Activated CD8-positive, alpha-beta memory T cell treated with anti-CD3 and anti-CD28 coated beads, Interleukin-2, amount 10 ng/mL, durations not matched to agents 7 days and 5 days (primary cell): ENCODE measurements at regions of chr14 and their contacts with region 1.

Region 1: DNA sequence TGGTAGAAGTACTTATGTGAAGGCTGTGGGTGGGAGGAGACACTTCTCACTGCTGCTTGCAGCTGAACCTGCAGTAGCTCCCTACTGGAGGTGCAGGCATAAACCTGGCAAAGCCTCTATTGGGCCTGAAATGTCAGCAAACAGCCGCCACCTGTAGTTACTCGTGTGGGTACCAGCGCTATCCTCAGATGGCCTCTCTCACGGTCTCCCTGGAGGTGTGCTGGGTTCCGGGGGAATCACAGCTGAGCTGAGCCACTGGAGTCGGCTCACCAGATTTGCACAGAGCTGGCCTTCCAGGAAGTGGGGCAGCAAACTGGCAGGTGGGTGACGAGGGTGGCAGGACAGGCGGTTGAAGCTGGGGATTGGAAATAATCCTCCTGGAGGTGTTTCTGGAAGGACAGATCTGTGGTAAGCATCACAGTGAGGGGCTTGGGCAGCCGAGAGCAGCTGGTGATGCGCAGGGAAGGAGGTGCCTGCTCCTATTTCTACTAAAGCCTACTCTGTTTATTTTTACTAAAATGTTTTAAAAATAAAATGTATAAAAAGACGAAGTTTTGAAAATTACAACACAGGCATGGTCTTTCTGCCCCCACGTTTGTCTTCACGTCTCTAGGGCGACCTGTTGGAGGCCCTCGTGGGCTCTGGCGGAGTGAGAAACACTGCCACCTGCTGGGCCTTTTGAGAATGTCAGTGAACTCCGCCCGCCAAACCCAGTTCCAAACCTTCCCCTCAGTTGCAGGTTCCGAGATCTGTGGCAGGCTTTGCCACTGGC is 67.8 kb upstream of the PLEKHG3 start:
- DNase-seq: peak; percentile 77
- ATAC-seq: peak; percentile 94
- H3K4me3 Mint-ChIP-seq: no peak overlapping the region
- H3K27ac Mint-ChIP-seq: no peak overlapping the region
- H3K4me1 Mint-ChIP-seq: peaks cover 8% of the 10 kb centered on the region
- H3K27me3 Mint-ChIP-seq: peaks cover 16% of the 10 kb centered on the region

Region 2: GRCh38 chr14:64338616-64339316 is 297.6 kb before region 1 on chr14:
- CTCF ChIA-PET with region 1: interaction called, 41 read pairs
- DNase-seq: peak; percentile 96
- ATAC-seq: peak; percentile 84
- H3K4me3 Mint-ChIP-seq: peak overlapping the region; percentile 94
- H3K27ac Mint-ChIP-seq: peak overlapping the region; percentile 83
- H3K4me1 Mint-ChIP-seq: peaks cover 25% of the 10 kb centered on the region
- H3K27me3 Mint-ChIP-seq: no peaks in the 10 kb centered on the region

Region 3: GRCh38 chr14:64510825-64511671 is 125.3 kb before region 1 on chr14:
- CTCF ChIA-PET with region 1: interaction called, 12 read pairs
- DNase-seq: peak; percentile 79
- ATAC-seq: peak; percentile 35
- H3K4me3 Mint-ChIP-seq: peak overlapping the region; percentile 91
- H3K27ac Mint-ChIP-seq: peak overlapping the region; percentile 98
- H3K4me1 Mint-ChIP-seq: peaks cover 66% of the 10 kb centered on the region
- H3K27me3 Mint-ChIP-seq: no peaks in the 10 kb centered on the region

Region 4: DNA sequence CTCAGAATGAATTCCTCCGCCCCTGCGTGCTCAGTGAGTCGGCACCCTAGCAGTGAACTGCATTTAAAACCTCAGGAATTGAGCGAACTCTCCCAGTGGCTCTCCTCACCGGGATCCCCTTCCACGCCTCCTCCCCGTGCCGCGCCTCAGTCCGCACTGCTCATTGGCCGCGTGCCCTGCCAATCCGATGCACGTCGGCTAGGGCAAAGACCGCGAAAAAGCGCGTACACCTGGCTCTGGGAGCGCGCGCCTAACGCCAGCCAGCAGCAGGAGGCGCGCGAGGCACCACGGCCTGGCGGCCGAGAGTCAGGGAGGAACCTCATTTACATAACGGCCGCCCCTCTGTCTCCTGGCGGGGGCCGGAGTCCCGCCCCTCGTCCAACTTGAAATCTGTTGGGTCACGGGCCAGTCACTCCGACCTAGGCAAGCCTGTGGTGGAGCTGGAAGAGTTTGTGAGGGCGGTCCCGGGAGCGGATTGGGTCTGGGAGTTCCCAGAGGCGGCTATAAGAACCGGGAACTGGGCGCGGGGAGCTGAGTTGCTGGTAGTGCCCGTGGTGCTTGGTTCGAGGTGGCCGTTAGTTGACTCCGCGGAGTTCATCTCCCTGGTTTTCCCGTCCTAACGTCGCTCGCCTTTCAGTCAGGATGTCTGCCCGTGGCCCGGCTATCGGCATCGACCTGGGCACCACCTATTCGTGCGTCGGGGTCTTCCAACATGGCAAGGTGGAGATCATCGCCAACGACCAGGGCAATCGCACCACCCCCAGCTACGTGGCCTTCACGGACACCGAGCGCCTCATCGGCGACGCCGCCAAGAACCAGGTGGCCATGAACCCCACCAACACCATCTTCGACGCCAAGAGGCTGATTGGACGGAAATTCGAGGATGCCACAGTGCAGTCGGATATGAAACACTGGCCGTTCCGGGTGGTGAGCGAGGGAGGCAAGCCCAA is 95.9 kb before region 1 on chr14 and contains the start of gene HSPA2:
- CTCF ChIA-PET with region 1: interaction called, 16 read pairs
- DNase-seq: peak; percentile 98
- ATAC-seq: peak; percentile 95
- H3K4me3 Mint-ChIP-seq: peak within 1 kb of the TSS; percentile 82
- H3K27ac Mint-ChIP-seq: peak within 1 kb of the TSS; percentile 96
- H3K4me1 Mint-ChIP-seq: peaks cover 38% of the 10 kb centered on the region
- H3K27me3 Mint-ChIP-seq: peaks cover 50% of the 10 kb centered on the region
- total RNA-seq, gene HSPA2: 7.2 to 7.3 TPM

Region 5: DNA sequence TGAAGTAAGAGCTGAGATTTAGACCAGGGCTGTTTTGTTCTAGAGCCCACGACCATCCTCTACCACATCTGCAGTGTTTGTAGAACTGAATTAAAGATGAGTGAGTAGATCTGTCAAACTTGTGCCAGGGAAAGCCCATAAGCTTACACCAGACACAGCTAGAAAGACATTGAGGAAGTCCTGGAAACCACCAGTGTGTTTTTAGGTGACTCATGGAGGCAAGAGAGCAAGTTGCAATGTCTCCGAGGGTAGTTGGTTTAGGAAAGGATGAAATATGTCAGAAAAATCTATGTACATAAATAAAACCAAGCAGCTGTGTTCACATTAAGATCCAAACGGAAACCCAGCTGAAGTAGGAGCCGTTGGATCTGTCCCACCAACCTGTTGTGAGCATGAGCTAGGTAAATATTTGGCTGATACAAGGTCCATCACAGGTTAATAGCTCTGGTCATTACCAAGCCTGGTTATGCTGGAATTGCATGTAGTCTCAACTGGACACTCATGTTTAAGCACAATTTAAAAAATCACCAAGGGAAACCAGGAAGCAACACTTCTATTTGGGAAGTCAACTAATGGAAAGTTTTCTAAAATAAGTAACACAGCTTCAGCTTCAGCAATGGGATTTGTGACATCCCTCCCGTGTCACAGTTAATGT is 18.0 kb after region 1 on chr14:
- CTCF ChIA-PET with region 1: interaction called, 13 read pairs
- DNase-seq: no peak
- ATAC-seq: peak; percentile 58
- H3K4me3 Mint-ChIP-seq: no peak overlapping the region
- H3K27ac Mint-ChIP-seq: no peak overlapping the region
- H3K4me1 Mint-ChIP-seq: peaks cover 21% of the 10 kb centered on the region
- H3K27me3 Mint-ChIP-seq: peaks cover 33% of the 10 kb centered on the region

Region 6: DNA sequence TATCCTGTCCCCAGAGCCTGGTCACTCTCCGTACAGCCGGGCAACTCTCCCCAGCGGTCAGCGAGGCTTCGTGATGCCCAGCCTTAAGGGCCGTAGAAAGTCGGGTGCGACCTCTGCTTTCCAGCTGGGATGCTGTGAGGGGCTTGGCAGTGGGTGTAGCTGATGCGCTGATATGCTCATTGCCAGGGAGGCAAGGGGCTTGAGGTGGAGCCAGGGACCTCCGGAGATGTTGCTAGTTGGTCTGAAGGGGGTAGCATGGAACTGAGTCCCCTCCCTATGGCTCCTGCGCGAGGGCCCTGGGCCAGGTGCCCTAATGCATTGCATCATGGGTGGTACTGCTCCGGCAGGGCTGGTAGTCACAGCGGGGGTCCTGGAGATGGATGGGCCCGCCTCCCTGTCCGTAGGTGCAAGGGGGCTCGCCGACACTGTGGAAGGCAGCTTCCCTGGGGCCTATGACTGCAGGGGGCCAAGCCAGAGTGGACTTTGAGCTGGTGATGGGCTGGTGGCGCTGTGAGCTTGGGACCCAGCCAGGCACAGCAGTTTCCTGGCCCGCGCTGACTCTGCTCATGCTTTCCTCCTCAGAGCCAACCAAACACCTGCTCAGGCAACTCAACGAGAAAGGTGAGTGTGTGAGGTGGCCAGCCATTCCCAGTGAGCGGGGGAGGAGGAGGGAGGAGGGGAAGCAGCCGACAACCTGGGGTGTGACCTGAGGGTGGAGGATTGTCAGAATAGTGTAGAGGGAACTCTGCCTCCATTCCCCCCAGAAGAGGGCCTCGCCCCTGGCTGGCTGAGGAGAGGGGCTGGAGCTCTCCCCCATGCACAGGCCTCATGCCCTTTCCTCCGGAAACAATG is 100.1 kb after region 1 on chr14:
- CTCF ChIA-PET with region 1: no interaction called
- DNase-seq: no peak
- ATAC-seq: no peak
- H3K4me3 Mint-ChIP-seq: no peak overlapping the region
- H3K27ac Mint-ChIP-seq: no peak overlapping the region
- H3K4me1 Mint-ChIP-seq: peaks cover 22% of the 10 kb centered on the region
- H3K27me3 Mint-ChIP-seq: no peaks in the 10 kb centered on the region

Region 7: DNA sequence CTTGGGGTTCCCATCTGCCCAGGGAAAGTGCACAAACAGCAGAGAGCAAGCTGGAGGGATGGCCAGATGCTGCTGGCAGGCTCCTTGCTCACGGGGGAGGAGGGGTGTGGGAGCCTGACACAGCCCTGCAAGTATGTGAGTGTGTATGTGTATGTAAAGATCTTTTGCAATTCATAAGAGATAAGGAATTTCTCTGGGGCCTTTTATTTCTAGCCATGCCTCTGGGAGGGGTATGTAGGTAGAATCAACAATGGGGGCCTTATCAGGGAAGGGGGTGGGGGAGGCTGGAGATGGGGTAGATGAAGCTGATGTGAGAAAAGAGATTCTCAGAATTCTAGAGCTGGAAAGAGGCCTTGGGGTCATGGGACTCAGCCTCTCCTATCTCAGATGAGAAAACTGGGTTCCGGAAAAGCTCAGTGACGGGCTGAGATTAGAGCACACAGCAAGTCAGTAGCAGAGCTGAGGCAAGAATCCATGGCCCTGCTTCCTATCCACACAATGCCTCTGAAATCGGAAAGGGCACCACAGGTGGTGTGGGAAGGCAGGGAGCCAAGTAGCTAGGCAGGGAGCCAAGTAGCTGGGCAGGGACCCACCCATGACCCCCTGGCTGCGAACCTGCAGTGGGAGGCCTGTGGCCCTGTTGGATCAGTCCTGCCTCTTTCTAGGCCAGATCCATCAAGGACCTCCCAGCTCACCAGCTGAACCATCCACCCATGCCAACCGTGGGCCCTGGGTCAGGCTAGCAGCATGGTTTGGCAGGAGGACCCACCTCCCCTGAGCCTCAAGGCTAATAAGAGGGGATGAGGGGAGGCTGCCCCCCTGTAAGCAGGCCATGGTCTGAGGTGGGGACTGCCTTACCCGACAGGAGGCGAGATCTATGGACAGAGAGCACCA is 122.5 kb after region 1 on chr14:
- CTCF ChIA-PET with region 1: no interaction called
- DNase-seq: no peak
- ATAC-seq: no peak
- H3K4me3 Mint-ChIP-seq: no peak overlapping the region
- H3K27ac Mint-ChIP-seq: no peak overlapping the region
- H3K4me1 Mint-ChIP-seq: peaks cover 48% of the 10 kb centered on the region
- H3K27me3 Mint-ChIP-seq: peaks cover 18% of the 10 kb centered on the region

Region 8: DNA sequence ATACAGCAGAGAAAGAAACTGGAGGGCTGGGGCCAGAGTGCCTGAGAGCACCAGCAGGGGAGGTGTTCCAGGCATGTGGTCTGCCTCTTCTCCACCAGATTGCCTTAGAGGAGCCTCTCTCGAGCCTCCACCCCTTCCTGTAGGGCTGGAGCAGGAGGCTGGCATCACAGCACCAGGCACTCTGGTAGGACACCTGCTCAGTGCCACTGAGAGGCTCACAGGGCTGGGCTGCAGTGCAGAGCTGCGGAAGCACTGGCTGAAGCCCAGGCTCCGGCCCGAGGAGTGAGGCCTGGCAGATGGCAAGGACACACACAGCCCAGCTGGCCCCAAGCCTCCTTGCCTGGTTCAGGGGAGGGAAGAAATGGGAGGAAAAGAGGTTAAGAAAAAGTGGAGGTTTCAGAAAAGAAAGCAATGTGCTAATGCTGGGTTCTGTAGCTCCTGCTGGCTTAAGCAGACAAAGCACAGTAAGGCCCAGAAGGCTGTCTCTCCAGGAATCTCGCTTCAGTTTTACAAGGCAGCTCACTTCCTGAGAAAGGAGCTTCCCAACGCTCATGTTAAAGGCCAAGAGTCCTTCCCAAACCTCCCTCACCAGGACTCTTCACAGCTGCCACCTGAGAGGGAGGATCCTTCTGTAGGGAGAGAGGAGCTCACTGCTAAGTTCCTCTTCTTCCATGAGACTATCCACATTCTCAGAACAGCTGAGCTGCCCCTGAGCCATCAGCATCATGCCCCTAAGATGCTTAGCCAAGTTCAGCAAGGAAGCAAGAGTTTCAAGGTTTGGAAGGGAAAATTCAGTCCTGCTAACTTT is 219.5 kb after region 1 on chr14:
- CTCF ChIA-PET with region 1: no interaction called
- DNase-seq: no peak
- ATAC-seq: no peak
- H3K4me3 Mint-ChIP-seq: no peak overlapping the region
- H3K27ac Mint-ChIP-seq: no peak overlapping the region
- H3K4me1 Mint-ChIP-seq: no peaks in the 10 kb centered on the region
- H3K27me3 Mint-ChIP-seq: peaks cover 44% of the 10 kb centered on the region